Heart right ventricle (tissue), 16 donors: ENCODE measurements at regions of chr11 and their contacts with region 1.

Region 1: DNA sequence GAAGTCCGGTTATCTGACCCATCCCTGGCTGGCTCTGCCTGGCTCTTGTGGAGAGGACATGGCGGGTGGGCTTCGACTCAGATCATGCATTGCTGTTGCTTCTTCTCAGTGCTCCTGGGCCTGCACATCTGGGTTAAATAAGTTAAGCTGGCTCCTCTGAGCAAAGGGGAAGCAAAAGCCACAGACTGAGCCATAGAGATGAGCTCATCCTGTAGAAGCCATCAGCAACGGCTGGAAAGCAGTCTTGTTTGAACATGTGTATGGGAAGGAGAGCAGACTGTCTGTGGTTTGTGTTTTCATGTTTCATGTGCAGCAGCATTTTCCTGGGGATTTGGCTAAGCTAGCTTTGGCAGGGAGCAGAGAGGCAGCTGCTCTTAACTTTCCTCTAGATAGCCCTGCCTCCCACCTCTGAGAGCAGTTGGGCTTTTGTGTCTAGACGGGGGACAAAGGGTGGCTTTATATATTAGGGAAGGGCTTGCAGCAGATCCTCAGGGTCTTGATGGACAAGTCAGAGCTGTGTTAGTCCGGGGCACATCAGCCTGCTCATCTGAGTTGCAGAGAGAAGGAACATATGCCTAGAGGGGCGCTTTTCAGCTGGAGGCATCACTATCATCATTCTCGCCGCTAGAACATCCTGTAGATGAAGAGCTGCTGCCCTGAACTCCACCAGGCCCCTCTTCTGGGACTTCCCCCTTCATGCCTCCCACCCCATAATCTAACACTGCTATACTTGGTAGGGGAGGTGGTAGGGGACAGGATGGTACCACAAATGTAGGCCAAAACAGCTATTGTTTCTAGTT is 14.9 kb downstream of the DCPS start:
- DNase-seq: peak in 1 of 2 donors; percentile 59
- ATAC-seq: peak; percentile 81 to 88 (median 86)
- H3K4me3 ChIP-seq: peak overlapping the region in 5 of 10 donors; percentile 9 to 23 (median 17)
- H3K27ac ChIP-seq: peak overlapping the region; percentile 63 to 88 (median 78)
- H3K4me1 ChIP-seq: peaks cover 15 to 45% (median 33%) of the 10 kb centered on the region in 9 donors
- H3K27me3 ChIP-seq: no peaks in the 10 kb centered on the region
- CTCF ChIP-seq: no peak

Region 2: GRCh38 chr11:125950696-125951651 is 367.8 kb before region 1 on chr11:
- intact Hi-C with region 1: no loop called
- DNase-seq: peak; percentile 73 to 82
- ATAC-seq: peak; percentile 86 to 92 (median 88)
- H3K4me3 ChIP-seq: no peak overlapping the region
- H3K27ac ChIP-seq: peak overlapping the region in 8 of 10 donors; percentile 30 to 79 (median 62)
- H3K4me1 ChIP-seq: peaks cover 9 to 31% (median 22%) of the 10 kb centered on the region in 9 donors
- H3K27me3 ChIP-seq: peaks cover 0 to 6% (median 0%) of the 10 kb centered on the region in 7 donors
- CTCF ChIP-seq: no peak

Region 3: DNA sequence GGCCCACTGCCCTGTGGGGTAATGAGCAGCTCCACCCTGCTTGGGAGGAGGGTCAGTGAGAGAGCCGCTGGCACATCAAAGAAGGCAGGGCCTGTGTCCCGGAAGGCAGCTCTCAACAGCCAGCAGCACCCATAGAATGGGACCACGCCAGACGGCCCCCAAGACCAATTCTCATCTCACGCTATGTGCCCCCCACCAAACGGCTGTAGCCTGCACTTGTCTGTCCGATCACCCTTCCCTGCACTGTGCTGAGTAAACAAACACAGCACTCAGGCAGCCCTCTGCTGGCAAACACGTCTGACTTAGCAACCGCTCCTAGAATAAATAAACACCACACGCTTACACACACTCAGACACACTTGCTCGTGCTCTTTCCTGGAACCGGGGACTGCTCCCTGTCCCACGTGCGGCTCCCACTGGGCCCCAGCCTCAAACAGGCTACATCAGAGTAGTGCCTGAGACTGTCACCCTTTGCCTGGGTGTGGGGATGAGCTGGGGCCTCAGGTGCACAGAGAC is 202.9 kb before region 1 on chr11:
- intact Hi-C with region 1: no loop called
- DNase-seq: peak; percentile 64 to 75
- ATAC-seq: peak; percentile 63 to 81 (median 73)
- H3K4me3 ChIP-seq: no peak overlapping the region
- H3K27ac ChIP-seq: peak overlapping the region; percentile 23 to 86 (median 78)
- H3K4me1 ChIP-seq: peaks cover 25 to 59% (median 49%) of the 10 kb centered on the region in 9 donors
- H3K27me3 ChIP-seq: no peaks in the 10 kb centered on the region
- CTCF ChIP-seq: peak in 5 of 9 donors; percentile 7 to 48 (median 45)

Region 4: GRCh38 chr11:126345759-126346585 is 27.2 kb after region 1 on chr11:
- intact Hi-C with region 1: loop called in 2 of 10 experiments (anchors 2 to 5 kb)
- DNase-seq: peak; percentile 53 to 58
- ATAC-seq: peak; percentile 18 to 78 (median 36)
- H3K4me3 ChIP-seq: no peak overlapping the region
- H3K27ac ChIP-seq: peak overlapping the region; percentile 54 to 86 (median 72)
- H3K4me1 ChIP-seq: peaks cover 24 to 77% (median 60%) of the 10 kb centered on the region in 9 donors
- H3K27me3 ChIP-seq: no peaks in the 10 kb centered on the region
- CTCF ChIP-seq: no peak

Region 5: GRCh38 chr11:126355324-126355925 is 36.7 kb after region 1 on chr11 and contains the start of gene ST3GAL4:
- intact Hi-C with region 1: loop called in 5 of 10 experiments (anchors 2 to 5 kb)
- DNase-seq: peak; percentile 87 to 91
- ATAC-seq: peak; percentile 76 to 88 (median 84)
- H3K4me3 ChIP-seq: peak within 1 kb of the TSS; percentile 36 to 97 (median 74)
- H3K27ac ChIP-seq: peak within 1 kb of the TSS; percentile 68 to 96 (median 88)
- H3K4me1 ChIP-seq: peaks cover 28 to 93% (median 89%) of the 10 kb centered on the region in 9 donors
- H3K27me3 ChIP-seq: no peaks in the 10 kb centered on the region
- CTCF ChIP-seq: no peak
- total RNA-seq, gene ST3GAL4: 24.8 to 51.0 (median 43.4) TPM

Region 6: DNA sequence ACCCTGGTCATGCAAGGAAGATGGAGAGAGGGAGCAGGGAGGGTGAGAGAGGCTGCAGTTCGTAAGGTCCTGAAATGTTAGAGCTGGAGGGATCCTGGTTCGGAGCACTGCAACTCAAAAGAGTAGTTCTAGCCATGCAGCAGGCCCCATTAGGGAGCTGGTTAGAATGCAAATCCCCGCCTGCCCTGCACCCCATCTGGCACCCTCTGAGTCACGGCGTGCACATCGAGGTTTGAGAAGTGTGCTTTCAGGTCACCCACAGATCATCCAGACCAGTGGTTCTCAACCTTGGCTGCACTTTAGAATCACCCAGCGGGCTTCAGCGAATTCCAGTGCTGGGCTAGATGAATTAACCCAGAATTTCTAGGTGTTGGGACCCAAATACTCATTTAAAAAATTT is 84.9 kb after region 1 on chr11:
- intact Hi-C with region 1: no loop called
- DNase-seq: no peak
- ATAC-seq: peak in 2 of 8 donors; percentile 31 to 45
- H3K4me3 ChIP-seq: no peak overlapping the region
- H3K27ac ChIP-seq: no peak overlapping the region
- H3K4me1 ChIP-seq: peaks cover 0 to 39% (median 22%) of the 10 kb centered on the region in 9 donors
- H3K27me3 ChIP-seq: no peaks in the 10 kb centered on the region
- CTCF ChIP-seq: no peak

Region 7: DNA sequence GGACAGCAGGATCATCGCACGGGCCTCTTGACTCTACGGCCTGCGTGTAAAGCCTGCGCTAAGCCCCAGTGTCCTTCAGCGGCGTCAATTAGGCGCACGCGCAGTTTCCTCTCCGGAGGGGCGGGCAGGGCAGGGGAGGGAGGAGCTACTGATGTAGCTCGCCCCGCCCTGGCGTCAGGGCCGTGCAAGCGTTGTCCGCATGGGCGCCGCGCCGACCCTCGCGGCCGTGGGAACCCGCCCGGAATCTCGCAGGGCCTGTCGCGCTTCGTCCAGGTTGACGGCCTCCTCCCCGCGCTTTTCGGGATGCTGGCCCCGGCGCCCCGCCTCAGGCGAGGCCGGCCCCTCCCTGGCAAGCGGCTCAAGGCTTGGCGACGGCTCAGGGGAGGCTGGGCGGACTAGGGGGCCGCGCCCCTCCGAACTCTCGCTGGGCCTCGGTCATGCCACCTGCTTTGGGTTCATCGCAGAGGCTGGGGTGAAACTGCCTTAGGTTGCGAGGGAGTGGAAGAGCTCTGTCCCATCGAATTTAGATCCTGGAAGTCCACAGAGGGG is 97.8 kb after region 1 on chr11:
- intact Hi-C with region 1: loop called in 5 of 10 experiments (anchors 5 kb)
- DNase-seq: peak; percentile 92 to 95
- ATAC-seq: peak; percentile 85 to 91 (median 88)
- H3K4me3 ChIP-seq: peak overlapping the region in 9 of 10 donors; percentile 27 to 55 (median 52)
- H3K27ac ChIP-seq: peak overlapping the region; percentile 70 to 93 (median 85)
- H3K4me1 ChIP-seq: peaks cover 26 to 90% (median 64%) of the 10 kb centered on the region in 9 donors
- H3K27me3 ChIP-seq: no peaks in the 10 kb centered on the region
- CTCF ChIP-seq: peak in 1 of 9 donors; percentile 8

Region 8: DNA sequence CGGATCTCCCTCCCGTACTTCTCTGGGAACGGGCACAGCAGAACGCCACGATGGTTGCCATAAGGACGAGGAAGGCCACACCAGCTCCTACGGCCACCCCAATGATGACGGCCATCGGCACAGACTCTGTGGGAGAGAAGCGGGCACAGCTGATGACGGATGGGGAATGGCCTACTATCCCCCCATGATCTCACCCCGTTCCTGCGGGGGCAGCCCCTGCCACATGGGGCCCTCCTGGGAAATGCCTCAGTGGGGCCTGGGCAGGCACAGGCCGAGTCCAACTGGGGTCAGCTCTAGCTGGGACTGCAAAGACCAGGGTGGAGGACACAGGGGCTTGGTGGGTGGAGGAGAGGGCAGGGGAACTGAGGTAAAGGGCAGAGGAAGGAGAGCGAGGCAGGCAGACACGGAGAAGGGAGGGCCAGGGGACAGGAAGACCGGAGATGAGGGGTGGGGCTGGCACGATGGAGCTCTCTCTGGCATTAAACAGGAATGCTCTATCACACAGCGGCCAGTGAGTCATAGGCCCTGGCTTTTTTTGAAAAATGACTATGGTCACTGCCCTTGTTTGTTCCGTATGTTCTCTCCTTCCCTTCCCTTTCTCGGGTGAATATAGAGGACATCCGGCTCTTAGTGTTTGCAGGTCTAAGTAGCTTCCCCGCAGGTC is 112.8 kb after region 1 on chr11:
- intact Hi-C with region 1: loop called in 7 of 10 experiments (anchors 5 to 10 kb)
- DNase-seq: peak; percentile 57 to 64
- ATAC-seq: peak; percentile 52 to 84 (median 74)
- H3K4me3 ChIP-seq: no peak overlapping the region
- H3K27ac ChIP-seq: peak overlapping the region; percentile 43 to 87 (median 72)
- H3K4me1 ChIP-seq: peaks cover 12 to 74% (median 30%) of the 10 kb centered on the region in 9 donors
- H3K27me3 ChIP-seq: no peaks in the 10 kb centered on the region
- CTCF ChIP-seq: no peak